Naive thymus-derived CD4-positive, alpha-beta T cell (primary cell): ENCODE measurements at regions of chr16 and their contacts with region 1.

Region 1: DNA sequence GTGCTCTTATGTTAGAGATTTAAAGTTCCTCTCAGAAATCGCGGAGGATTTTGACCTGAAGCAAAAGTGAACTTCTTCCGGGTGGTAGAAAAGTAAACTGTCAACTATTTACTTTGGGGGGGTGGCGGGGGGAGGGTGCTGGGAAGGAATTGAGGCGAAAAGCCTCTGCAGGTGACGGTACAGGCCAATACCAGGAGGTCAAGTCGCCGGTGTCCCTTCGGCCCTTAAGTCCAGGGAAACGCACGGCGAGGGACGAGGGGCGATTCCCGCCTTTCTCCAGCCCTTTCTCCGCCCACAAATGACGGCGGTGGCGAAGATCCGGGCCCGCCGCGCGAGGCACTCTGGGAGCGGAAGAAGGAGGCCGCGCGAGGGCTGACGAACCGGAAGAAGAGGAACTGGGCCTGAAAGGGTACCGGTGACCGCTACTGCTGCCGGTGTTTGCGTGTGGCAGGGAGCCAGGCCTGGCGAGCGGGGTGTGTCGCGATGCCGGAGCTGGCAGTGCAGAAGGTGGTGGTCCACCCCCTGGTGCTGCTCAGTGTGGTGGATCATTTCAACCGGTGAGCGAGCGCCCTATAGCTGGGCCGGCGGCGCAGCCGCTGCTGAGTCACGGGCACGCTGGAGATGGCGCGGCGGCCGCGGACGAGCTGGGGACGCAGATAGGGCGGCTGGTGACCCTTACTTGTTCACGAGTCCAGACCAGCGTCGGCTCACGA is at the start of gene PSMD7:
- DNase-seq: peak; percentile 82 to 93 (median 90)
- ATAC-seq: peak; percentile 96
- H3K4me3 ChIP-seq: peak within 1 kb of the TSS; percentile 86
- H3K4me3 Mint-ChIP-seq: peak within 1 kb of the TSS; percentile 89 to 99 (median 96)
- H3K27ac ChIP-seq: peak within 1 kb of the TSS; percentile 96
- H3K27ac Mint-ChIP-seq: peak within 1 kb of the TSS; percentile 93 to 100 (median 98)
- H3K4me1 ChIP-seq: peaks cover 22 to 25% of the 10 kb centered on the region in 2 donors
- H3K4me1 Mint-ChIP-seq: peaks cover 21 to 52% (median 38%) of the 10 kb centered on the region in 7 donors
- H3K27me3 ChIP-seq: no peaks in the 10 kb centered on the region
- H3K27me3 Mint-ChIP-seq: no peaks in the 10 kb centered on the region
- total RNA-seq, gene PSMD7: 61.1 to 107 (median 71.3) TPM

Region 2: GRCh38 chr16:74146193-74146592 is 150.4 kb before region 1 on chr16:
- CTCF ChIA-PET with region 1: no interaction called
- POLR2A ChIA-PET with region 1: no interaction called
- intact Hi-C with region 1: no loop called
- DNase-seq: no peak
- ATAC-seq: no peak
- H3K4me3 ChIP-seq: no peak overlapping the region
- H3K4me3 Mint-ChIP-seq: no peak overlapping the region
- H3K27ac ChIP-seq: no peak overlapping the region
- H3K27ac Mint-ChIP-seq: no peak overlapping the region
- H3K4me1 ChIP-seq: no peaks in the 10 kb centered on the region
- H3K4me1 Mint-ChIP-seq: no peaks in the 10 kb centered on the region
- H3K27me3 ChIP-seq: no peaks in the 10 kb centered on the region
- H3K27me3 Mint-ChIP-seq: peaks cover 0 to 16% (median 2%) of the 10 kb centered on the region in 5 donors

Region 3: GRCh38 chr16:74226338-74226954 is 70.1 kb before region 1 on chr16:
- CTCF ChIA-PET with region 1: no interaction called
- POLR2A ChIA-PET with region 1: no interaction called
- intact Hi-C with region 1: no loop called
- DNase-seq: no peak
- ATAC-seq: no peak
- H3K4me3 ChIP-seq: no peak overlapping the region
- H3K4me3 Mint-ChIP-seq: no peak overlapping the region
- H3K27ac ChIP-seq: no peak overlapping the region
- H3K27ac Mint-ChIP-seq: no peak overlapping the region
- H3K4me1 ChIP-seq: no peaks in the 10 kb centered on the region
- H3K4me1 Mint-ChIP-seq: peaks cover 0 to 2% (median 0%) of the 10 kb centered on the region in 7 donors
- H3K27me3 ChIP-seq: no peaks in the 10 kb centered on the region
- H3K27me3 Mint-ChIP-seq: peaks cover 7 to 26% (median 16%) of the 10 kb centered on the region in 5 donors

Region 4: GRCh38 chr16:74279805-74280204 is 16.8 kb before region 1 on chr16:
- CTCF ChIA-PET with region 1: no interaction called
- POLR2A ChIA-PET with region 1: no interaction called
- intact Hi-C with region 1: no loop called
- DNase-seq: no peak
- ATAC-seq: no peak
- H3K4me3 ChIP-seq: no peak overlapping the region
- H3K4me3 Mint-ChIP-seq: no peak overlapping the region
- H3K27ac ChIP-seq: no peak overlapping the region
- H3K27ac Mint-ChIP-seq: no peak overlapping the region
- H3K4me1 ChIP-seq: no peaks in the 10 kb centered on the region
- H3K4me1 Mint-ChIP-seq: peaks cover 0 to 2% (median 0%) of the 10 kb centered on the region in 7 donors
- H3K27me3 ChIP-seq: no peaks in the 10 kb centered on the region
- H3K27me3 Mint-ChIP-seq: peaks cover 2 to 16% (median 14%) of the 10 kb centered on the region in 5 donors

Region 5: DNA sequence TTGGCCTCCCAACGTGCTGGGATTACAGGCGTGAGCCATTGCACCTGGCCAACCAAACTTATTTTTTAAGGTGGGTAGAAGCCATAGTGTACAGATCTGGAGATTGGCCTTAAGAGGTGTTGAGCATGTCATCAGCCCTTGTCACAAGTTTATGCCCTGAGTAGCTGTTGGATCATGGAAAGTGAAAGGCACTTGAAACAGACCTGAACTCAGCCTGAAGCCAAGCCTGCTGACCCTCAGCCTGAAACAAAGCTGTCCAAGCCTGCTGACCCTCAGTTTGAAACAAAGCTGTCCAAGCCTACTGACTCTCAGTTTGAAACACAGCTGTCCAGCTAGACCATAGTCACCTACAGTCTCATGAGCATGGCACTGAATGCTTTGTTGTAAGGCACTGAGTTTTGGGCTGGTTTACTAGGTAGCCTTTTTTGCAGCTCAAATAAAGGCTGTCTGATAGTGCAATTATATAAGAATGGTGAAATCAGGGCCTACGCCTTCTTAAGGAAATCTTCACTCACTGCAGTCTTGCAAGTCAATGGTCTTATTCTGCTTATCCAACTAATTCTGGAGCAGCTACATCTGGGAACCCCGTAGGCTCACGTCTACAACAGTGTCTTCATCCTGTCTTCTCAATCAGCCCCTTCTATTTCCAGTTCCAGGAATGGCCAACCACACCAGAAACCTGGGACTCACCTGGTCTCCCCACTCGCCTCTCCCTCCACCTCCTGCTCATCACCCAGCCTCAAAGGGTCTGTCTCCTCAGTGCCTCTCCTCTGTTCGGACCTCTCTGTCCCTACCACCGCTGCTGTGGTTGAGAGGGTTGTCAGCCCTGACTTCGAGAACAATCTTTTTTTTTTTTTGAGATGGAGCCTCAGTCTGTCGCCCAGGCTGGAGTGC is 76.6 kb after region 1 on chr16:
- CTCF ChIA-PET with region 1: no interaction called
- POLR2A ChIA-PET with region 1: interaction called, 8 read pairs
- intact Hi-C with region 1: loop called (anchors 1 kb)
- DNase-seq: no peak
- ATAC-seq: no peak
- H3K4me3 ChIP-seq: no peak overlapping the region
- H3K4me3 Mint-ChIP-seq: no peak overlapping the region
- H3K27ac ChIP-seq: no peak overlapping the region
- H3K27ac Mint-ChIP-seq: peak overlapping the region in 2 of 9 donors; percentile 18 to 86
- H3K4me1 ChIP-seq: no peaks in the 10 kb centered on the region
- H3K4me1 Mint-ChIP-seq: peaks cover 0 to 4% (median 0%) of the 10 kb centered on the region in 7 donors
- H3K27me3 ChIP-seq: no peaks in the 10 kb centered on the region
- H3K27me3 Mint-ChIP-seq: no peaks in the 10 kb centered on the region

Region 6: DNA sequence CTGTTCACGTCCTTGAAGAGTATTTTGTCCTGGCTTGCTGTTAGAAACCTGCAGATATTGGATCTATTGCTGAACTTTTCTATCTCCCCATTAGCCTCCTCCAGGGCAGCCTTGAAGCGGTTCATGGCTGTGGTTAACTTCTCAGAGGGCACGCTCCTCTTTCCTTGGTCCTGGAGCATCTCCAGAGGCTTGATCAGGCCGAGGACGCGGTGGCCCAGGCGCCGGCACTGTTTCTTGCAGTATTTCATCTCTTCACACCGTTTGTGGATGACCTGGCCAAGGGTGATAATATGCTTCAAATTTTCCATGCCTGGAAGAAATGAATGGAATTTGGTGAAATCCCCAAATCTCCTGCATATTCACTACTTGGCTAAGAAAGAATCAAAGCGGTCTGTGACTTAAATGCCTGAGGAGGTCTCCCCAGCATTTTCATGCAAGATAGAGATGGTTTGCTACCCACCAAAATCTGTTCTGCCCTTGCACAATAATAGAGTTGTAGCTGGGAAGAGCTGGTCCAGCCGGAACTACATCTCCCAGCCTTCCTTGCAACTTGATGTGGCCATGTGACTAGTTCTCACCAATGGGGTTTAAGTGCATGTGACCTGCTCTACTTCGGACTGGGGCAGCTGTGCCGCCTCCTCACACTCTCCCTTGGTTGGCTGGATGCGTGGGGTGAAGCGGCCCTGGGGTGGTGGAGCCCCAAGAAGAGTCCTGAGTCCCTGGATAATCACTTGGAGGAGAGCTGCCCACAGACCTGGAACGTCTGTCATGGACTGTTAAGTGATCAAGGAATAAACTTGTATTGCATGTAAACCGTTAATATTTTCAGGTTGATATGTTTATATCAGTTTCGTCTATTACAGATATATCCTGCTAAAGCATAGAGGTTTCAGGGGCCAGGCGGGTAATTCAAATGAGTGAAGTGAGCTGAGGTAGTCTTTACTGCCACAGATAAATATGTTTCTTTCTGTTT is 399.1 kb after region 1 on chr16:
- CTCF ChIA-PET with region 1: no interaction called
- POLR2A ChIA-PET with region 1: interaction called, 3 read pairs
- intact Hi-C with region 1: loop called (anchors 2 to 10 kb)
- DNase-seq: peak; percentile 33 to 67 (median 51)
- ATAC-seq: peak; percentile 89
- H3K4me3 ChIP-seq: peak overlapping the region; percentile 45
- H3K4me3 Mint-ChIP-seq: peak overlapping the region; percentile 74 to 94 (median 85)
- H3K27ac ChIP-seq: peak overlapping the region; percentile 45
- H3K27ac Mint-ChIP-seq: peak overlapping the region in 8 of 9 donors; percentile 43 to 87 (median 80)
- H3K4me1 ChIP-seq: peaks cover 14 to 24% of the 10 kb centered on the region in 2 donors
- H3K4me1 Mint-ChIP-seq: peaks cover 35 to 74% (median 59%) of the 10 kb centered on the region in 7 donors
- H3K27me3 ChIP-seq: no peaks in the 10 kb centered on the region
- H3K27me3 Mint-ChIP-seq: no peaks in the 10 kb centered on the region

Region 7: DNA sequence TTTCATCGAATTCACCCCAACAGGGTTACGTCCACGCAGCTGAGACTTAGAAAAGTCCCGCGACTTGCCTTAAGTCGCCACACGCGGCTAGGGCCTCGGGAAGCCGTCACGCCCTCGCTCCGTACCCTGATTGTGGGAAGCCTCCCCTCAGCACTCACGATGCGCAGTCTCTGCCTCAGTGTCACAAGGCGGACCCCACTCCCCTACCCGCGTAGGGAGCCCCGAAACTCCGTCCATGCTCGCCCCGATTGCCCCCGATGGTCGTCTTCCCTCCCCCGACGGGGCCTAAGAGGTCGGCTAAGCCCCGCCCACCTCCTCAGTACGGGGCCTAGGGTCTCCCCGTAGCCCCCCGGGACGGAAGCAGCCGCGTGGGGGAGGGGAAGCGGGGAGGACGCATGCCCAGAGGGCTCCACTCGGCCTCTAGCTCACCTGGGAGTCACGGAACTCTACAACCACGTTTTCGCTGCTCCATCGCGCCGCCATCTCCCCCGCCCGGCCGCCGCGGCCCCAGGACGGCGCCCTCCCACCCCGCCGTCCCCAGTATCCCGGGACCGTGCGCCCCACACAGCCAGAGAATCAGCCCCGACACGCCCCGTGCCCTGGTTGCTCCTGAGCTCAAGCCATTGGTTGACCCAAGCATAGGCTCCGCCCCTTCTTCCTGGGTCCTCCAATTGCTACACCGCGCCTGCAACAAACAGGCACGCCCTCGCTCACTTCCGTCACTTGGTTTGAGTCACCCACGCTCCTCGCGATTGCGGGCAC is 688.1 kb after region 1 on chr16 and contains the start of gene WDR59:
- CTCF ChIA-PET with region 1: no interaction called
- POLR2A ChIA-PET with region 1: interaction called, 3 read pairs
- intact Hi-C with region 1: loop called in 1 of 2 experiments (anchors 2 kb)
- DNase-seq: peak; percentile 87 to 99 (median 98)
- ATAC-seq: peak; percentile 100
- H3K4me3 ChIP-seq: peak within 1 kb of the TSS; percentile 98
- H3K4me3 Mint-ChIP-seq: peak within 1 kb of the TSS; percentile 90 to 98 (median 95)
- H3K27ac ChIP-seq: peak within 1 kb of the TSS; percentile 86
- H3K27ac Mint-ChIP-seq: peak within 1 kb of the TSS; percentile 72 to 96 (median 92)
- H3K4me1 ChIP-seq: peaks cover 5 to 6% of the 10 kb centered on the region in 2 donors
- H3K4me1 Mint-ChIP-seq: peaks cover 0 to 27% (median 23%) of the 10 kb centered on the region in 7 donors
- H3K27me3 ChIP-seq: no peaks in the 10 kb centered on the region
- H3K27me3 Mint-ChIP-seq: no peaks in the 10 kb centered on the region
- total RNA-seq, gene WDR59: 82.7 to 130 (median 84.7) TPM